Calu3 (cell line): ENCODE measurements at regions of chr16 and their contacts with region 1.

Region 1: GRCh38 chr16:27203429-27204231 is at the start of gene KDM8:
- DNase-seq: peak; percentile 99
- H3K4me3 Mint-ChIP-seq: peak within 1 kb of the TSS; percentile 77
- H3K27ac Mint-ChIP-seq: peak within 1 kb of the TSS; percentile 83
- H3K4me1 Mint-ChIP-seq: peaks cover 8% of the 10 kb centered on the region
- H3K27me3 Mint-ChIP-seq: peaks cover 5% of the 10 kb centered on the region
- CTCF ChIP-seq: no peak
- total RNA-seq, gene KDM8: 8.4 and 10.2 TPM in 2 replicates

Region 2: DNA sequence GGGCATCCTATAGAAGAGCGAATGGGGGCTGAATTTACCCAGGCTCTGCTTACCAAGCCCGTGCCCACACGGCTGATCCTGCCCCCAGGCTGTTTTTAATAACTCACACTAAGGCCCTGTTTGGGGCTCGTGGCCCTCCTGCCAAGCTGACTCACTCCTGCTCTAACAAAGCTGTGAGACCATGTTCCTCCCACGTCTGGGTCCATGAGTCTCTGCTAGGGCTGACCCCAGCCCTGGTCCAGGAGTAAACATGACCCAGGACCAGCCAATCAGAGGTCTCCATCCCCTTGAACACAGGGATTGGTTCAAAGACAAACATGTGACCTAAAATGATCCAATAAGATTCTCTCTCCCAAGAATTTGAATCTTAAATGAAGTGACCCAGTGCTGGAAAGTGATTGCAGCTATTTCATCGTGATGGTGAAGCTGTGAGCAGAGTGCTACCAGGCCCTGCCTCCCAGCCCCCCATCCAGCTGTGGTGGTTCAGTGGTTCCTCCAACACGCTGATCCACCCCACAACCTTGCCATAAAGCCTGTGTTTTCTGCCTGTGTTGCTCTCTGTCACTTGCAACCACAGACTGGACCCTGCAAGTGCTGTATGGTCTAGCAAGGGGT is 79.7 kb before region 1 on chr16:
- CTCF ChIA-PET with region 1: no interaction called
- intact Hi-C with region 1: no loop called
- DNase-seq: no peak
- H3K4me3 Mint-ChIP-seq: no peak overlapping the region
- H3K27ac Mint-ChIP-seq: no peak overlapping the region
- H3K4me1 Mint-ChIP-seq: no peaks in the 10 kb centered on the region
- H3K27me3 Mint-ChIP-seq: peaks cover 17% of the 10 kb centered on the region
- CTCF ChIP-seq: no peak

Region 3: GRCh38 chr16:27161398-27161797 is 42.2 kb before region 1 on chr16:
- CTCF ChIA-PET with region 1: no interaction called
- intact Hi-C with region 1: no loop called
- DNase-seq: no peak
- H3K4me3 Mint-ChIP-seq: no peak overlapping the region
- H3K27ac Mint-ChIP-seq: no peak overlapping the region
- H3K4me1 Mint-ChIP-seq: no peaks in the 10 kb centered on the region
- H3K27me3 Mint-ChIP-seq: peaks cover 53% of the 10 kb centered on the region
- CTCF ChIP-seq: no peak

Region 4: DNA sequence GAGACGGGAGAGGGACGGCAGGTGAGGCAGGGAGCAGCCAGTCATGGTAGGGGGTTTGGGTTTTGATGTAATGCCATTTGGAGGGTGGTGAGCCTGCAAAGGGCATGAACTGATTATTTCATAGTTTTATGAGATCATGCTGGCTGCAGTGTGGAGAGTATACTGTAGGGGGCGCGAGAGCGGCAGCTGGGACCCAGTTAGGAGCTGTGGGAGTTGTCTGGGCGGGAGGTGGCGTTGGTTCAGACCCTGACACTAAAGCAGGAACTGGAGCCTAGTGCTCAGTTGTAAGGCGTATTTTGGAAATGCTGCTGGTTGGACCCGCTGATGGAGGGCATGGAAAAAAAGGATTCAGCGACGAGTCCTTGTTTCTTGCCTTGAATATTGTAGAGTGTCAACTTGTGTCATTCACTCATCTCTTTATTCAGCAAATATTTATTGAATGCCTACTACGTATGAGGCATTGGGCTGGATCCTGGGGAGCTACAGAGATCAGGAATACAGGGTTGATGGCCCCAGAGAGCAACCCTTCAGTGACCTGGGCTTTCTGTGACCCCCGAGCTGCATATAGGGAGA is 24.0 kb before region 1 on chr16:
- CTCF ChIA-PET with region 1: interaction called, 10 read pairs
- intact Hi-C with region 1: no loop called
- DNase-seq: peak; percentile 75
- H3K4me3 Mint-ChIP-seq: no peak overlapping the region
- H3K27ac Mint-ChIP-seq: no peak overlapping the region
- H3K4me1 Mint-ChIP-seq: peaks cover 7% of the 10 kb centered on the region
- H3K27me3 Mint-ChIP-seq: peaks cover 52% of the 10 kb centered on the region
- CTCF ChIP-seq: peak; percentile 68

Region 5: GRCh38 chr16:27217256-27217655 is 13.6 kb after region 1 on chr16:
- CTCF ChIA-PET with region 1: interaction called, 3 read pairs
- intact Hi-C with region 1: loop called (anchors 1 kb)
- DNase-seq: no peak
- H3K4me3 Mint-ChIP-seq: no peak overlapping the region
- H3K27ac Mint-ChIP-seq: no peak overlapping the region
- H3K4me1 Mint-ChIP-seq: peaks cover 7% of the 10 kb centered on the region
- H3K27me3 Mint-ChIP-seq: no peaks in the 10 kb centered on the region
- CTCF ChIP-seq: no peak